CD4-positive, alpha-beta T cell (primary cell): ENCODE measurements at regions of chr1 and their contacts with region 1.

Region 1: GRCh38 chr1:184892116-184892515 is 82.2 kb downstream of the NIBAN1 start:
- DNase-seq: peak in 3 of 14 experiments; percentile 34 to 54 (median 39)
- ATAC-seq: peak; percentile 44
- H3K4me3 ChIP-seq: no peak overlapping the region
- H3K4me3 Mint-ChIP-seq: peak overlapping the region; percentile 75
- H3K27ac ChIP-seq: peak overlapping the region in 1 of 2 donors; percentile 78
- H3K27ac Mint-ChIP-seq: peak overlapping the region; percentile 91
- H3K4me1 ChIP-seq: peaks cover 23% of the 10 kb centered on the region
- H3K4me1 Mint-ChIP-seq: peaks cover 30% of the 10 kb centered on the region
- H3K27me3 ChIP-seq: no peaks in the 10 kb centered on the region
- H3K27me3 Mint-ChIP-seq: no peaks in the 10 kb centered on the region
- CTCF ChIP-seq: no peak

Region 2: GRCh38 chr1:184843732-184844495 is 48.2 kb before region 1 on chr1:
- CTCF ChIA-PET with region 1: interaction called, 3 read pairs
- POLR2A ChIA-PET with region 1: no interaction called
- intact Hi-C with region 1: loop called in 1 of 2 experiments (anchors 5 kb)
- DNase-seq: peak; percentile 21 to 89 (median 48)
- ATAC-seq: peak; percentile 48
- H3K4me3 ChIP-seq: no peak overlapping the region
- H3K4me3 Mint-ChIP-seq: no peak overlapping the region
- H3K27ac ChIP-seq: no peak overlapping the region
- H3K27ac Mint-ChIP-seq: peak overlapping the region; percentile 84
- H3K4me1 ChIP-seq: peaks cover 24% of the 10 kb centered on the region
- H3K4me1 Mint-ChIP-seq: peaks cover 40% of the 10 kb centered on the region
- H3K27me3 ChIP-seq: no peaks in the 10 kb centered on the region
- H3K27me3 Mint-ChIP-seq: no peaks in the 10 kb centered on the region
- CTCF ChIP-seq: no peak

Region 3: DNA sequence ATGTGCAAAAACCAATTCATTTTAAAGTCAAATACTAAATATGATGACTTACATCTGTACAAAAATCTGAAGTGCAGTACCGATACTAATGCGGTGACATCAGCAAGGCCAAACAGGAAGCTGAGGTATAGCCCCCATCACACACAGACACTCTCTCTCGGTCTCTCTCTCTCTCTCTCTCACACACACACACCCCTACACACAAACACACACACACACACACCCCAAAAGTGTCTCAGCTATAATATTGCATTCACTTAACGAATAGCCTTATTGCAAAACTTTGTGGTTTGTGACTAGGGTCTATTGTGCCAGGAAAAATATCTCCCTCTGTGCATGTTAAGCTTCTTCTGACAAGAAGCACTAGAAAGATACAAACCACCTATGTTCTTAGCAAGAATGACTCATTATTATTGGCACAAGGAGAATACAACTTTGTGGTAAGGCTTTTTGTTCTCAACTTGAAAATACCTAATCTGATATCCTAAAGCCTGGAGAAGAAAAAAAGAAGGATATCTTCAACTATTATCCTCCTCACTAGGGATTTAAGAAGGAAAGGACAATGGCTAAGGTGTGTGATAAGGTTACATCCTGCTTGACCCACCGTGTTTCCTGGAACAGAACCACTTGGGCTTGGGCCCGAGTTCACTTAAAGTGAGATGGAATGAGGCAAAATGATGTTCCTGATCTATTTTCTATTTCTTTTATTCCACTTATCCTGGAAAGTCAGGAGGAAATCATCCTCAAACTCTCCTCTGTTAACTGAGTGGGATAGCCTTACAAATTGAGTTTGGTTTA is 24.9 kb before region 1 on chr1:
- CTCF ChIA-PET with region 1: no interaction called
- POLR2A ChIA-PET with region 1: interaction called, 3 read pairs
- intact Hi-C with region 1: loop called in 1 of 2 experiments (anchors 2 kb)
- DNase-seq: peak in 12 of 14 experiments; percentile 9 to 83 (median 35)
- ATAC-seq: peak; percentile 87
- H3K4me3 ChIP-seq: no peak overlapping the region
- H3K4me3 Mint-ChIP-seq: peak overlapping the region; percentile 43
- H3K27ac ChIP-seq: peak overlapping the region; percentile 22 to 35
- H3K27ac Mint-ChIP-seq: peak overlapping the region; percentile 73
- H3K4me1 ChIP-seq: peaks cover 7% of the 10 kb centered on the region
- H3K4me1 Mint-ChIP-seq: peaks cover 28% of the 10 kb centered on the region
- H3K27me3 ChIP-seq: no peaks in the 10 kb centered on the region
- H3K27me3 Mint-ChIP-seq: no peaks in the 10 kb centered on the region
- CTCF ChIP-seq: no peak

Region 4: DNA sequence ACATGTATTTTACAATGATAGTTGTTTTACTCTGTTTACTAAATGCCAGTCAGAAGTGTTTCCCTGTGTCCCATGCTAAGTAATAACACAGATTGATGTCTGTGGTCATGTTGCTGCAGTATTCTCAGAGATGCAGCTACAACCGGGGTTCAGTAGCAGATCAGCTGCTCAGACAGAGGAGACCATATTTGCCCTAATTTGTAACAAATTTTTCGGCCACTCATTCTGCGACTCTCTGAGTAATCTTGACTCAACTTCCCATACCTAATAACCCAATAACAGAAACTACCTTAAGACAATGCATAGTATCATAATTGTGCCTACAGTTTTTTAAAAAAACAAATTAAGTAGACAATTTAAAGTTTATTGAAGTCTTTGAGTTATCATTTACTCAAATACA is 49.6 kb after region 1 on chr1:
- CTCF ChIA-PET with region 1: no interaction called
- POLR2A ChIA-PET with region 1: no interaction called
- intact Hi-C with region 1: no loop called
- DNase-seq: no peak
- ATAC-seq: no peak
- H3K4me3 ChIP-seq: no peak overlapping the region
- H3K4me3 Mint-ChIP-seq: no peak overlapping the region
- H3K27ac ChIP-seq: no peak overlapping the region
- H3K27ac Mint-ChIP-seq: no peak overlapping the region
- H3K4me1 ChIP-seq: peaks cover 8% of the 10 kb centered on the region
- H3K4me1 Mint-ChIP-seq: no peaks in the 10 kb centered on the region
- H3K27me3 ChIP-seq: no peaks in the 10 kb centered on the region
- H3K27me3 Mint-ChIP-seq: no peaks in the 10 kb centered on the region
- CTCF ChIP-seq: no peak

Region 5: GRCh38 chr1:184973272-184974055 is 81.3 kb after region 1 on chr1:
- CTCF ChIA-PET with region 1: interaction called, 6 read pairs
- POLR2A ChIA-PET with region 1: no interaction called
- intact Hi-C with region 1: loop called (anchors 5 kb)
- DNase-seq: peak in 9 of 14 experiments; percentile 2 to 93 (median 33)
- ATAC-seq: peak; percentile 19
- H3K4me3 ChIP-seq: peak overlapping the region; percentile 84
- H3K4me3 Mint-ChIP-seq: peak overlapping the region; percentile 97
- H3K27ac ChIP-seq: peak overlapping the region; percentile 52 to 73
- H3K27ac Mint-ChIP-seq: peak overlapping the region; percentile 87
- H3K4me1 ChIP-seq: peaks cover 34% of the 10 kb centered on the region
- H3K4me1 Mint-ChIP-seq: peaks cover 46% of the 10 kb centered on the region
- H3K27me3 ChIP-seq: peaks cover 0 to 2% of the 10 kb centered on the region in 2 experiments
- H3K27me3 Mint-ChIP-seq: peaks cover 8% of the 10 kb centered on the region
- CTCF ChIP-seq: no peak

Region 6: GRCh38 chr1:184982002-184982954 is 90.2 kb after region 1 on chr1:
- CTCF ChIA-PET with region 1: interaction called, 11 read pairs
- POLR2A ChIA-PET with region 1: no interaction called
- intact Hi-C with region 1: loop called in 1 of 2 experiments (anchors 5 kb)
- DNase-seq: peak; percentile 56 to 87 (median 66)
- ATAC-seq: peak; percentile 96
- H3K4me3 ChIP-seq: no peak overlapping the region
- H3K4me3 Mint-ChIP-seq: no peak overlapping the region
- H3K27ac ChIP-seq: no peak overlapping the region
- H3K27ac Mint-ChIP-seq: no peak overlapping the region
- H3K4me1 ChIP-seq: peaks cover 3% of the 10 kb centered on the region
- H3K4me1 Mint-ChIP-seq: no peaks in the 10 kb centered on the region
- H3K27me3 ChIP-seq: peaks cover 0 to 3% of the 10 kb centered on the region in 2 experiments
- H3K27me3 Mint-ChIP-seq: peaks cover 4% of the 10 kb centered on the region
- CTCF ChIP-seq: peak; percentile 89

Region 7: GRCh38 chr1:185636848-185637247 is 744.7 kb after region 1 on chr1:
- CTCF ChIA-PET with region 1: no interaction called
- POLR2A ChIA-PET with region 1: no interaction called
- intact Hi-C with region 1: no loop called
- DNase-seq: peak in 2 of 14 experiments; percentile 10 to 11
- ATAC-seq: no peak
- H3K4me3 ChIP-seq: no peak overlapping the region
- H3K4me3 Mint-ChIP-seq: no peak overlapping the region
- H3K27ac ChIP-seq: no peak overlapping the region
- H3K27ac Mint-ChIP-seq: no peak overlapping the region
- H3K4me1 ChIP-seq: no peaks in the 10 kb centered on the region
- H3K4me1 Mint-ChIP-seq: no peaks in the 10 kb centered on the region
- H3K27me3 ChIP-seq: no peaks in the 10 kb centered on the region
- H3K27me3 Mint-ChIP-seq: no peaks in the 10 kb centered on the region
- CTCF ChIP-seq: no peak